ENCODE measurements at regions of chr12 and their contacts with region 1.

Region 1: DNA sequence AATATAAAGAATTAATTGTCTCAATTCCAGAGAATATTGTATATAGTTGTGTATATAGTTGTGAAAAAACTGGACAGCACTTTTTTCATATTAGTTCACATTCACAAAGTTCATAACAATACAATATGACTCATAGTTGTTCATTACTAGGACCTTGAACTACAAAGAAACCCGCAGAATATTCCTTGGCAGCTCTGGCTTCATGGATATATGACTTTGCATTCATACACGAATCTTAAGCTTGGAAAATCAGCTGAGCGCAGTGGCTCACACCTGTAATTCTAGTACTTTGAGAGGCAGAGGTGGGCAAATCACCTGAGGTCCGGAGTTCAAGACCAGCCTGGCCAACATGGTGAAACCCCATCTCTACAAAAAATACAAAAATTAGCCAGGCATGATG is 38.1 kb upstream of the PCED1B start:
- DNase-seq: no peak
- ATAC-seq: no peak
- H3K4me3 Mint-ChIP-seq: no peak overlapping the region
- H3K27ac Mint-ChIP-seq: no peak overlapping the region
- H3K4me1 Mint-ChIP-seq: peaks cover 5% of the 10 kb centered on the region
- H3K27me3 Mint-ChIP-seq: no peaks in the 10 kb centered on the region
- CTCF ChIP-seq: no peak

Region 2: GRCh38 chr12:47071241-47071852 is 30.0 kb after region 1 on chr12:
- CTCF ChIA-PET with region 1: interaction called, 11 read pairs
- POLR2A ChIA-PET with region 1: no interaction called
- intact Hi-C with region 1: no loop called
- DNase-seq: no peak
- ATAC-seq: no peak
- H3K4me3 Mint-ChIP-seq: no peak overlapping the region
- H3K27ac Mint-ChIP-seq: no peak overlapping the region
- H3K4me1 Mint-ChIP-seq: peaks cover 24% of the 10 kb centered on the region
- H3K27me3 Mint-ChIP-seq: no peaks in the 10 kb centered on the region
- CTCF ChIP-seq: peak; percentile 76

Region 3: GRCh38 chr12:47102845-47103651 is 61.7 kb after region 1 on chr12:
- CTCF ChIA-PET with region 1: no interaction called
- POLR2A ChIA-PET with region 1: no interaction called
- intact Hi-C with region 1: no loop called
- DNase-seq: no peak
- ATAC-seq: no peak
- H3K4me3 Mint-ChIP-seq: no peak overlapping the region
- H3K27ac Mint-ChIP-seq: no peak overlapping the region
- H3K4me1 Mint-ChIP-seq: peaks cover 9% of the 10 kb centered on the region
- H3K27me3 Mint-ChIP-seq: no peaks in the 10 kb centered on the region
- CTCF ChIP-seq: no peak